Body of pancreas (tissue), 4 donors: ENCODE measurements at regions of chr1 and their contacts with region 1.

Region 1: GRCh38 chr1:92822879-92823278 is 9.0 kb upstream of the RPL5 start:
- DNase-seq: no peak
- ATAC-seq: no peak
- H3K4me3 ChIP-seq: no peak overlapping the region
- H3K27ac ChIP-seq: no peak overlapping the region
- H3K4me1 ChIP-seq: no peaks in the 10 kb centered on the region
- H3K27me3 ChIP-seq: no peaks in the 10 kb centered on the region
- CTCF ChIP-seq: no peak
- POLR2A ChIP-seq: no peak

Region 2: GRCh38 chr1:92754000-92754718 is 68.7 kb before region 1 on chr1:
- intact Hi-C with region 1: loop called (anchors 10 kb)
- DNase-seq: no peak
- ATAC-seq: no peak
- H3K4me3 ChIP-seq: no peak overlapping the region
- H3K27ac ChIP-seq: no peak overlapping the region
- H3K4me1 ChIP-seq: peaks cover 14% of the 10 kb centered on the region
- H3K27me3 ChIP-seq: no peaks in the 10 kb centered on the region
- CTCF ChIP-seq: no peak
- POLR2A ChIP-seq: no peak

Region 3: DNA sequence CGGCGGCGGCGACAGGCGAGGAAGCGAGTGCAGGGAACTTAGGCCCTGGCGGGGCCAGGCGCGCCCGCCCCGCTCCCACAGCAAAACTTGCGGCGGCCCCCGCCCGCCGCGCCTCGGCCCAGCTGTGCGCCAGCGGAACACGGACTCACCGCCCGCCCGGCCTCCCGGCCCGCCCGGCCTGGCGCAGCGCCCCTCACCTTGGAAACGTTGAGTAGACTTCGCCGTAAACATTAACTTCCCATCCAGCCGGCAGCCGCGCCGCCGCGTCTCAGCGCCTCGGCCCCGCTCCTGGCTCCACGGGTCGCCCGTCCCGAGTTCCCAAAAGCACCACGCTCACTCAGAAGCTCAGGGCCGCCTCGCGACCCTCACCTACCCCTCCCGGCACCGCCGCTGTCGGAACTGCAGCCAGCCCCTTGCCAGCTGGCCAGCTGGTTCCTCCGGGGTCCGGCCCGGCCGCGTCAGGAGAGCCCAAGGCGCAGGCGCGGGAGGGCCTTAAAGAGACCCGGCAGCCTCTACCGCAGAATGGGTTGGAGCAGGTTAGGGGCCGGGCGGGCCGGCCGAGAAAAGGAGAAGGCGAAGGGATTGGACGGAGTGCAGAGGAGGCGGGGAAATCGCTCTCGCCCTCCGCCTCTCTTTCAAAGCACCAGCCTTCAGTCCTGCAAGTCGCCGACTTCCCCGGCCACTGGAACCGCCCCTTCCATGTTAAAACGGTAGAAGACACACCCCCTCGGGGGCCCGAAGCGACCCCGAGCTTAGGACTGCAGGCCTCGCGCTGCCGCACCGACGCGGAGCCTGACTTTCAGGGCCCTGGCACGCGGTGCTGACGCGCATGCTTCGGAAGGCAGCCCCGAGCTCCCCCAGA is 38.0 kb before region 1 on chr1 and contains the start of gene EVI5:
- intact Hi-C with region 1: no loop called
- DNase-seq: peak; percentile 95 to 97 (median 96)
- ATAC-seq: peak; percentile 94
- H3K4me3 ChIP-seq: peak within 1 kb of the TSS; percentile 32 to 74
- H3K27ac ChIP-seq: peak within 1 kb of the TSS; percentile 91 to 100 (median 94)
- H3K4me1 ChIP-seq: peaks cover 28% of the 10 kb centered on the region
- H3K27me3 ChIP-seq: no peaks in the 10 kb centered on the region
- CTCF ChIP-seq: peak in 2 of 7 experiments; percentile 10 to 52
- POLR2A ChIP-seq: peak; percentile 91 to 96 (median 93)
- total RNA-seq, gene EVI5: 7.9 to 18.9 TPM